AG04450 (cell line): ENCODE measurements at regions of chr15 and their contacts with region 1.

Region 1: GRCh38 chr15:34304613-34305012 is 33.0 kb downstream of the SLC12A6 start:
- DNase-seq: peak; percentile 34
- H3K4me3 ChIP-seq: no peak overlapping the region
- H3K27ac ChIP-seq: no peak overlapping the region
- H3K27me3 ChIP-seq: no peaks in the 10 kb centered on the region
- CTCF ChIP-seq: no peak

Region 2: GRCh38 chr15:34282384-34282783 is 22.2 kb before region 1 on chr15:
- CTCF ChIA-PET with region 1: interaction called, 10 read pairs
- POLR2A ChIA-PET with region 1: no interaction called
- DNase-seq: no peak
- H3K4me3 ChIP-seq: no peak overlapping the region
- H3K27ac ChIP-seq: no peak overlapping the region
- H3K27me3 ChIP-seq: no peaks in the 10 kb centered on the region
- CTCF ChIP-seq: no peak

Region 3: DNA sequence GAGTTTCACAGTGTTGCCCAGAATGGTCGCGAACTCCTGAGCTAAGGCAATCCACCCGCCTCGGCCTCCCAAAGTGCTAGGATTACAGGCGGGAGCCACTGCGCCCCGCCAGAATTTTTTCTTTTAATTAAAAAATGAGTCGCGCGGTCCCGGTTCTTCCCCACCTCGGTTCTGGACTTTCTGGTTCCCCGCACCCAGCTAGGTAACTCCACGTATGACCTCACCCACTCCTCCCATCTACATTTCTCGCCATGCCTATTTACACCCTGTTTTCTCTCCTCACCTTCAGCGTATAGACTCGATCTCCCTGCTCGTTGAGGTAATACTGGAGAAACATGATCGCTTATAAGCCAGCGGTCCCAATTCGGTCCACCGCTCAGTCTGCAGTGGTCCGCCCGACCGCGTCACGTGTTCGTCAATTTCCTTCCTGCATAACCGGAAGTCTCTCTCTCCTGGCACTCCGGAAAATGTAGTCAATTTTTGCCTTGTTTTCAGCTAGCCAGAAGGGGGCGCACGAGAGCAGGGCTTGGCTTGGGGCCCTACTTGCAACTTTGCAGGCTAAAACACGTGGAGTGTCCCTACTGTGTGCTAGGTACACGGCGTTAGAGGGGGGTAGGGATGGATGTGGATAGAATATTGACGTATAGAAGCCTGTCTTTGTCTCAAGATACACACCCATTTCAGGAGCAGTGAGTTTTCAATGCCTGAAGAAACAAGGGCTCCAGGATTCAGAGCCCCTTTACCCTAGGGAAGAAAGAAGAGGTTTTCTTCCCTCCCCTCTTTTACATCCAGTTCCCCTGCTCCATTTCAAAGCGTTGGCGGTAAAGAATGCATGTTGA is 38.3 kb after region 1 on chr15 and contains the starts of genes NOP10 and NUTM1:
- CTCF ChIA-PET with region 1: interaction called, 3 read pairs
- POLR2A ChIA-PET with region 1: interaction called, 11 read pairs
- DNase-seq: peak; percentile 86
- H3K4me3 ChIP-seq: peak within 1 kb of the TSS; percentile 99
- H3K27ac ChIP-seq: peak within 1 kb of the TSS; percentile 87
- H3K27me3 ChIP-seq: no peaks in the 10 kb centered on the region
- CTCF ChIP-seq: peak; percentile 93
- polyA plus RNA-seq, gene NOP10: 262 and 363 TPM in 2 replicates
- polyA plus RNA-seq, gene NUTM1: not detected in 2 replicates